Activated B cell treated with CpG ODN at 0.5 μM for 24 hours (primary cell): ENCODE measurements at regions of chr11 and their contacts with region 1.

Region 1: GRCh38 chr11:1917671-1918516 is 1.6 kb upstream of the TNNT3 start:
- DNase-seq: no peak
- ATAC-seq: peak; percentile 40
- H3K4me3 Mint-ChIP-seq: no peak overlapping the region
- H3K27ac Mint-ChIP-seq: no peak overlapping the region
- H3K4me1 Mint-ChIP-seq: peaks cover 7% of the 10 kb centered on the region
- H3K27me3 Mint-ChIP-seq: peaks cover 21% of the 10 kb centered on the region
- CTCF ChIP-seq: no peak

Region 2: DNA sequence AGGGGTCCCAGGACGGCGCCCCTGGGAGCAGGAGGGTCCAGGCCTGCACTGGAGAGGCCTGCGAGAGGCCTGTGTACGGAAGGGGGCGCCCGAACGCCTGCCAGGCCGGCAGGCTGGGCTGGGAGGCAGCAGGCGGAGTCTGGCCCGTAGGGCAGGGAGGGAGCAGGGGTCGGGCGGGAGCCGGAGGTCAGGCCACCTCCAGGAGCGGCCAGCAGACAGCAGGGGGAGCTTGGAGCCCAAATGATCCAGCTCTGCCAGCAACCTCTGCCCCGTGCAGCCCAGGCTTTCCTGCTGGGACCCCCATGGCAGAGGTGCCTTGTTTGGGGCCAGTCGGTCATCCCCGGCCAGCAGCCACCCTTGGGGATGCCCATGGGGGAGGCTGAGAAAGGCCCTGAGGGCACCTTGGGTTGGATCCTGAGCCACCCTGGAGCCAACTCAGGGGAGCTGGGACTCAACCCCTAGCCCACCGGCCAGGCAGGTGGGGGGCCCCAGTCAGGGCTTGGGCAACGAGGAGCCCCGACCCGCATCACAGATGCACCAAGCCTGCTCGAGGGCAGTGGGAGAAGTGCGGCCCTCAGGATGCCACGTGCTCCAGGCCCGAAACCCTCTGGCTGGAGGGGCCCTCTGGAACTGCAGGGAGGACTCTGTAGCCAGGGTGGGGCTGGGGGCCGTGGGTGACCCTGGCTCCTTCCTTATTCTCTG is 92.7 kb before region 1 on chr11:
- CTCF ChIA-PET with region 1: no interaction called
- POLR2A ChIA-PET with region 1: no interaction called
- intact Hi-C with region 1: no loop called
- DNase-seq: no peak
- ATAC-seq: peak; percentile 58
- H3K4me3 Mint-ChIP-seq: no peak overlapping the region
- H3K27ac Mint-ChIP-seq: no peak overlapping the region
- H3K4me1 Mint-ChIP-seq: no peaks in the 10 kb centered on the region
- H3K27me3 Mint-ChIP-seq: peaks cover 12% of the 10 kb centered on the region
- CTCF ChIP-seq: no peak

Region 3: GRCh38 chr11:1837171-1838076 is 80.5 kb before region 1 on chr11:
- CTCF ChIA-PET with region 1: interaction called, 3 read pairs
- POLR2A ChIA-PET with region 1: interaction called, 3 read pairs
- intact Hi-C with region 1: loop called (anchors 1 kb)
- DNase-seq: peak; percentile 76
- ATAC-seq: peak; percentile 80
- H3K4me3 Mint-ChIP-seq: no peak overlapping the region
- H3K27ac Mint-ChIP-seq: no peak overlapping the region
- H3K4me1 Mint-ChIP-seq: peaks cover 29% of the 10 kb centered on the region
- H3K27me3 Mint-ChIP-seq: peaks cover 3% of the 10 kb centered on the region
- CTCF ChIP-seq: peak; percentile 83

Region 4: GRCh38 chr11:1863352-1864216 is 54.3 kb before region 1 on chr11:
- CTCF ChIA-PET with region 1: no interaction called
- POLR2A ChIA-PET with region 1: no interaction called
- intact Hi-C with region 1: no loop called
- DNase-seq: no peak
- ATAC-seq: no peak
- H3K4me3 Mint-ChIP-seq: no peak overlapping the region
- H3K27ac Mint-ChIP-seq: no peak overlapping the region
- H3K4me1 Mint-ChIP-seq: peaks cover 39% of the 10 kb centered on the region
- H3K27me3 Mint-ChIP-seq: no peaks in the 10 kb centered on the region
- CTCF ChIP-seq: no peak

Region 5: DNA sequence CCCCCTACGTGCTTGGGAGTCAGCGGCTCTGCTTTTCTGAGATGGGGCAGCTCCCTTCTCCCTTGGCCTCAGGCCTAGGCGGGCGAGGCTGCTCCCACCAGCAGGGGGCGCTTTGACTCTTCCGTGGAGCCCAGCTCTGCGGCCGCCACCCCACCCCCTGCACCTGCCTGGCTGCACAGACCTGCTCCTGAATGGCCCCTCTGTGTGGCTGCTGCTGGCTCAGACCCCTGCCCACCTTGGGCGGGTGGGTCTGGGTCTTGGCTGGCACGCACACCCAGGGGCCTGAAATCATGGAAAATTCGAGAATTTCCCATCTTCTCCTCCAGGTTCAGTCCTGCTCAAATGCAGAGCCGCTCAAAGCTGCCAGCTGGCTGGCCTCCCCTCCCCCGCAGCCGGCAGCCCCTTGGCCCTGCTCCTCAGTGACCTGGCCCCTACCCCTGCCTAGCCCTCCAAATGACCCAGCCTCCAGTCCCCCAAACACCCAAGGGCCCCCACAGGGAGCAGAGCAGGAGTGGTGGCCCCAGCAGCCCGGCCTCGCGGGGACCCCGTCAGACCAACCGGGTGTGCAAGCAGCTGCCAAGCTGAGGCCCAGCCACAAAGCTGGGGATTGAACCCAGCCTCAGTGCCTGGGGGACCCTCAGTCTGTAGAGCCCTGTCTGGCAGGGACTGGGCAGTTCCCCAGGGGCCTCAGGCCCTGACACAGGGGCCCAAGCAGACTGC is 35.2 kb before region 1 on chr11:
- CTCF ChIA-PET with region 1: interaction called, 9 read pairs
- POLR2A ChIA-PET with region 1: interaction called, 5 read pairs
- intact Hi-C with region 1: loop called (anchors 5 kb)
- DNase-seq: peak; percentile 73
- ATAC-seq: peak; percentile 83
- H3K4me3 Mint-ChIP-seq: no peak overlapping the region
- H3K27ac Mint-ChIP-seq: no peak overlapping the region
- H3K4me1 Mint-ChIP-seq: peaks cover 35% of the 10 kb centered on the region
- H3K27me3 Mint-ChIP-seq: no peaks in the 10 kb centered on the region
- CTCF ChIP-seq: no peak

Region 6: DNA sequence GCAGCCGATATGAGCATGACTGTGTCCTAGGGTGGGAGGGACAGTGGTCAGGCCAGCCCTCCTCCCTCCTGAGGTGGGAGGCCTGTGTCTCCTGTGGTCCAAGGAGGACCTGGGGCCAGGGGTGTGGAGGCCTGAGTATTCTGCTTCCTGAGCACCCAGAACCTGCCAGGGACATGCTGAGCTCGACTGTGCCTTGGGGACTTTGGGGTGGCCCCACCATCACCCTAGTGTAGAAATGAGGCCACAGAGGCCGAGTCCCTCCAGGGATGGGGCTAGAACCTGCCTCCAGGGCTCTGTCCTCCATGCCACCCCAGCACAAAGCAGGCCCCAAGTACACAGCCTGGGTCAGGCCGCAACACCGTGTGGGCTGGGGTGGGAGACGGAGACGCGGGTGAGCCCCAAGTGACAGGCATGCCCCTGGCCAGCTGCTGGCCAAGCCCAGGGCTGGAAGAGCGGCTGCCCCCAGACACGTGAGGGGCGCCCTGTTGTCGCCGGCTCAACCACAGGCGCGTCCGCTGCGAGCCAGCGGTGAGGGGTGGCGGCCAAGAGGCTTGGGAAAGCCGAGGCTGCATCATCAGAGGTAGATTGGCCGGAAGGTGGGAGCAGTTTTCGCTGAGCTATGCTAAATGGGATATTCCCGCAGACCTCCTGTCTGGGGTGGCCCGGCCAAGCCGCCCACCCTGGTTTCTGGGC is 27.2 kb before region 1 on chr11:
- CTCF ChIA-PET with region 1: interaction called, 3 read pairs
- POLR2A ChIA-PET with region 1: interaction called, 13 read pairs
- intact Hi-C with region 1: no loop called
- DNase-seq: no peak
- ATAC-seq: no peak
- H3K4me3 Mint-ChIP-seq: no peak overlapping the region
- H3K27ac Mint-ChIP-seq: no peak overlapping the region
- H3K4me1 Mint-ChIP-seq: peaks cover 29% of the 10 kb centered on the region
- H3K27me3 Mint-ChIP-seq: no peaks in the 10 kb centered on the region
- CTCF ChIP-seq: no peak

Region 7: DNA sequence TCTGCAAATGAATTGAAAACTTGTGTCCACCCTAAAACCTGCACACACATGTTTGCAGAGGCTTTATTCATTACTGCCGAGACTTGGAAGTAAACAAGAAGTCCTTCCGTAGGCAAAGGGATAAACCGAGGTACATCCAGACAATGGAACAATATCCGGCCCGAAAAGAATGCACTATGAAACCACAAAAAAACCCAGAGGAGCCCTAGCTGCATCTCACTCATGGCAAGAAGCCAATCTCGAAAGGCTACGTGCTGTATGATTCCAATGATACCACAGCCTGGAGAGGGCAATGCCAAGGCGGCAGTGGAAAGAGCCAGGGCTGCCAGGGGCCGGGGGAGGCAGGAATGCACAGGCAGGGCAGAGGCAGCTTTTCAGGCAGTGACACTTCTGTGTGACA is 26.1 kb after region 1 on chr11:
- CTCF ChIA-PET with region 1: no interaction called
- POLR2A ChIA-PET with region 1: no interaction called
- intact Hi-C with region 1: loop called (anchors 1 kb)
- DNase-seq: peak; percentile 12
- ATAC-seq: no peak
- H3K4me3 Mint-ChIP-seq: peak overlapping the region; percentile 24
- H3K27ac Mint-ChIP-seq: no peak overlapping the region
- H3K4me1 Mint-ChIP-seq: peaks cover 2% of the 10 kb centered on the region
- H3K27me3 Mint-ChIP-seq: peaks cover 2% of the 10 kb centered on the region
- CTCF ChIP-seq: no peak

Region 8: GRCh38 chr11:1970956-1971355 is 53.1 kb after region 1 on chr11:
- CTCF ChIA-PET with region 1: no interaction called
- POLR2A ChIA-PET with region 1: no interaction called
- intact Hi-C with region 1: no loop called
- DNase-seq: no peak
- ATAC-seq: no peak
- H3K4me3 Mint-ChIP-seq: no peak overlapping the region
- H3K27ac Mint-ChIP-seq: no peak overlapping the region
- H3K4me1 Mint-ChIP-seq: no peaks in the 10 kb centered on the region
- H3K27me3 Mint-ChIP-seq: no peaks in the 10 kb centered on the region
- CTCF ChIP-seq: no peak

Region 9: GRCh38 chr11:2114430-2115241 is 196.7 kb after region 1 on chr11:
- CTCF ChIA-PET with region 1: no interaction called
- POLR2A ChIA-PET with region 1: no interaction called
- intact Hi-C with region 1: no loop called
- DNase-seq: no peak
- ATAC-seq: no peak
- H3K4me3 Mint-ChIP-seq: no peak overlapping the region
- H3K27ac Mint-ChIP-seq: no peak overlapping the region
- H3K4me1 Mint-ChIP-seq: no peaks in the 10 kb centered on the region
- H3K27me3 Mint-ChIP-seq: peaks cover 21% of the 10 kb centered on the region
- CTCF ChIP-seq: no peak